Body of pancreas (tissue), 4 donors: ENCODE measurements at regions of chr1 and their contacts with region 1.

Region 1: DNA sequence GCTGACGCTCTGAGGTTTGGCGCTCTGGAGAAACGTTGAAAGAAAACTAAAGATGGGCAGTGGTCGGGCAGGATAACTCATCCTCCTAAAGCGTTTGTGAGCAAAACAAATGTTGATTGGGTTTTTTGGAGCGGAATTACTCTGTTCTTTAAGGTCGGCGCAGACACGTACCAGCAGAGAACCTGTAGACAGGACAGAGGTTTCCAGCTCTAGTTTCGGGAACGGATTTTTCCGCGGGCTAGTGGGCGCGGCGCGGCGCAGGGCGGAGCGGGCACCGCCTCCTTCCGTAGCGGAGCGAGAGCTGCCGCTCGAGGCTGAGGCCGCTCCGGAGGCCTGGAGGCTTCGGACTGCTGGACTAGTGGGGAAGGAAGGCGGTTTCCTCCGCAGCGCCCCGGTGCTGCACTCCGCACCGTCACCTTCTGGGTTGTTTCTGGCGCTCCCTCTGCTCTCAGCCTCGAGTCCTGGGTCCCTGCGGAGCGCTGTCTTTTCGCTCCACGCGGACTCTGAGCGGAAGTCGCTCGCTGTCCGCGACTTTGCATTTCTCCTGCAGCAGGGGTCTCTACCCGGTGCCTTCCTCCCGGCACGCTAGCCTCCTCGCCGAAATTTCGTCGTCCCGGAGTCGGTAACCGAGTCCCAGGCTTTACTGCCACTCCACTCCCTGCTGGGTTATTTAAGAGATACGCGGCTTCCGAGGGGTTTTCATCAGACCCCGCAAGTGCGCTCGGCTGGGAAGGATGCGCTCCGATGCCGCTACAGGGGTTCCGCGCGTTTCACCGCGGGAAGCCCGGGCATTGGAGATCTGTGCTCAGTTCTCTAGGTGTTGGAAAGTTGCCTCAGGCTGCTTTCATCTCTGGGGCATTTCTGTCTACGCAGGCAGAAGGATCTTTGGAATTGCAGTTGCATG is 7.0 kb downstream of the FOXD2 start:
- DNase-seq: peak in 3 of 4 donors; percentile 5 to 24 (median 18)
- ATAC-seq: peak; percentile 22
- H3K4me3 ChIP-seq: no peak overlapping the region
- H3K27ac ChIP-seq: no peak overlapping the region
- H3K4me1 ChIP-seq: peaks cover 14% of the 10 kb centered on the region
- H3K27me3 ChIP-seq: peaks cover 0 to 54% of the 10 kb centered on the region in 2 donors
- CTCF ChIP-seq: no peak
- POLR2A ChIP-seq: no peak

Region 2: GRCh38 chr1:47578026-47578720 is 133.4 kb after region 1 on chr1:
- intact Hi-C with region 1: no loop called
- DNase-seq: no peak
- ATAC-seq: no peak
- H3K4me3 ChIP-seq: no peak overlapping the region
- H3K27ac ChIP-seq: no peak overlapping the region
- H3K4me1 ChIP-seq: peaks cover 7% of the 10 kb centered on the region
- H3K27me3 ChIP-seq: no peaks in the 10 kb centered on the region
- CTCF ChIP-seq: no peak
- POLR2A ChIP-seq: no peak

Region 3: GRCh38 chr1:47725992-47726855 is 281.4 kb after region 1 on chr1:
- intact Hi-C with region 1: loop called (anchors 5 kb)
- DNase-seq: peak; percentile 78 to 85 (median 80)
- ATAC-seq: peak; percentile 87
- H3K4me3 ChIP-seq: no peak overlapping the region
- H3K27ac ChIP-seq: no peak overlapping the region
- H3K4me1 ChIP-seq: peaks cover 15% of the 10 kb centered on the region
- H3K27me3 ChIP-seq: peaks cover 0 to 10% of the 10 kb centered on the region in 2 donors
- CTCF ChIP-seq: peak; percentile 56 to 83 (median 80)
- POLR2A ChIP-seq: no peak